ENCODE measurements at regions of chr21 and their contacts with region 1.

Region 1: GRCh38 chr21:39313571-39314142 is at the start of gene BRWD1:
- DNase-seq: peak; percentile 85
- CTCF ChIP-seq: peak; percentile 30

Region 2: GRCh38 chr21:39288987-39289386 is 24.7 kb before region 1 on chr21:
- CTCF ChIA-PET with region 1: no interaction called
- POLR2A ChIA-PET with region 1: no interaction called
- DNase-seq: no peak
- CTCF ChIP-seq: no peak

Region 3: GRCh38 chr21:39348355-39349210 is 34.9 kb after region 1 on chr21 and contains the start of gene HMGN1:
- CTCF ChIA-PET with region 1: interaction called, 10 read pairs
- POLR2A ChIA-PET with region 1: interaction called, 5 read pairs
- DNase-seq: peak; percentile 97
- CTCF ChIP-seq: no peak